CD14-positive monocyte (primary cell): ENCODE measurements at regions of chr22 and their contacts with region 1.

Region 1: GRCh38 chr22:37282385-37282677 is at the start of gene CYTH4:
- DNase-seq: peak; percentile 88 to 96 (median 91)
- H3K4me3 ChIP-seq: peak within 1 kb of the TSS; percentile 81 to 96 (median 82)
- H3K4me3 Mint-ChIP-seq: peak within 1 kb of the TSS; percentile 90 to 98
- H3K27ac ChIP-seq: peak within 1 kb of the TSS; percentile 98 to 99
- H3K27ac Mint-ChIP-seq: peak within 1 kb of the TSS; percentile 96 to 99 (median 98)
- H3K4me1 ChIP-seq: peaks cover 69 to 88% of the 10 kb centered on the region in 2 donors
- H3K4me1 Mint-ChIP-seq: peaks cover 73% of the 10 kb centered on the region
- H3K27me3 ChIP-seq: no peaks in the 10 kb centered on the region
- H3K27me3 Mint-ChIP-seq: peaks cover 0 to 4% (median 2%) of the 10 kb centered on the region in 3 donors
- CTCF ChIP-seq: no peak
- polyA plus RNA-seq, gene CYTH4: 51.0 to 254 (median 70.0) TPM

Region 2: DNA sequence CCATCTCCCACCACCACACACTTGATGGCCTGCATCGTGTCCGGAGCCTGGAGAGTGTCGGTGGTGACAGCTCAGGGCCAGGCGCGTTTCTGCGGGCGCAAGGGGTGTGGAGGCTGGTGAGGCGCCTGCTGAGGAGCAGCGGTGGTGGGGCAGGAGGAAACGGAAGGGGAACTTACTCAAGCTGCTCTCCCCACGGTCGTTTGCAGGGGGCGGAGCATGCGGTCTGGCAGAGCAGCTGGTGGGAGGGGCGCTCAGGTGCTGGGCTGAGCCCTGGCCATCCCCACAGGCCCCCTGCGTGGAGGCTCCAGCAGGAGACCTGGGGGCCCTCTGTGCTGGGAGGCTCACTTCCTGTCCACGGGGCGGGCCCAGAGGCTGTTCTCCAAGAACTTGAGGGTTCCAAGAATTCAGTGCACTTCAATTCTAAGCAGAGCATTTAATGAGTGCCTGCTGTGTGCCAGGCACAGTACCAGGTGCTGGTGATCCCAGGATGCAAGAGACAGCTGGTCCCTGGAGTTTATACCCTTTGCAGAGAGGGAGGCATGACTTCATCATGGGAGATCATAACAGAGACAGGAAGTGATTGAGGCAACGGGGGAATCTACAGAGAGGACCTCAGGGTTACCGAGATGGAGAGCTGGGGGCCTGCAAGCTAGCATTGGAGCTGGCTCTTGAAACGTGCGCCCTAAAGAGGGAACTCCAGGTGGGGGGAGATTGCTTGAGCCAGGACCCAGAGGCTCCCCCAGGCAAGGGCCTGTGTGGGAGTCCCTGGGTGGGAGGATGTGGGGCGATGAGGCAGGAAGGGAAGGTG is 38.0 kb before region 1 on chr22 and contains the start of gene RAC2:
- intact Hi-C with region 1: loop called in 1 of 2 experiments (anchors 5 kb)
- DNase-seq: peak; percentile 87 to 92 (median 89)
- H3K4me3 ChIP-seq: peak within 1 kb of the TSS; percentile 77 to 99 (median 96)
- H3K4me3 Mint-ChIP-seq: peak within 1 kb of the TSS; percentile 92 to 95
- H3K27ac ChIP-seq: peak within 1 kb of the TSS; percentile 96 to 98
- H3K27ac Mint-ChIP-seq: peak within 1 kb of the TSS; percentile 95 to 99 (median 97)
- H3K4me1 ChIP-seq: peaks cover 63 to 65% of the 10 kb centered on the region in 2 donors
- H3K4me1 Mint-ChIP-seq: peaks cover 62% of the 10 kb centered on the region
- H3K27me3 ChIP-seq: no peaks in the 10 kb centered on the region
- H3K27me3 Mint-ChIP-seq: peaks cover 0 to 3% (median 2%) of the 10 kb centered on the region in 3 donors
- CTCF ChIP-seq: no peak
- polyA plus RNA-seq, gene RAC2: 360 to 529 (median 526) TPM

Region 3: GRCh38 chr22:37267135-37267587 is 15.2 kb before region 1 on chr22:
- intact Hi-C with region 1: loop called in 1 of 2 experiments (anchors 2 kb)
- DNase-seq: peak in 2 of 3 donors; percentile 43 to 55
- H3K4me3 ChIP-seq: peak overlapping the region; percentile 21 to 82 (median 57)
- H3K4me3 Mint-ChIP-seq: peak overlapping the region; percentile 77 to 87
- H3K27ac ChIP-seq: peak overlapping the region; percentile 89 to 94
- H3K27ac Mint-ChIP-seq: peak overlapping the region; percentile 95 to 98 (median 97)
- H3K4me1 ChIP-seq: peaks cover 57 to 58% of the 10 kb centered on the region in 2 donors
- H3K4me1 Mint-ChIP-seq: peaks cover 56% of the 10 kb centered on the region
- H3K27me3 ChIP-seq: no peaks in the 10 kb centered on the region
- H3K27me3 Mint-ChIP-seq: peaks cover 2 to 15% (median 7%) of the 10 kb centered on the region in 3 donors
- CTCF ChIP-seq: peak; percentile 99

Region 4: DNA sequence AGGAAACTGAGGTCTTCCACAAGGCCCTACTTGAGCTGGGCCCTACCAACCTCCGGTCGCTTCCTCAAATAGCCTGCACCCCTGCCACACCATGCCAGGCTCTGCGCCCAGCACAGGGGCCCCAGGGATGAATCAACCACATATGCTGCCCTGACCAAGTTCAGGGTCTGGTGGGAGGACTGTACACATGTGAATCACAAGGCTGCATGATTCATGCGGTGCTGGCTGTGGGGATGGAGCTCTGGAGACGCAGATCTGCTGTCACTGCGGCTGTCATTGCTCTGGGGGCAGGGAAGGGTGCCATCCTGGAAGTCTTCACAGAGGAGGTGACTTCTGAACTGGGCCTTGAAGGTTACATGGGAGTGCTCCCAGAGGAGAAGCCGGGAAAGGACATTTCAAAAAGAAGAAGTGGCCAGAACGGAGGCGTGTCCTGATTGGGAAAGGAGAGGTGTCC is 21.5 kb after region 1 on chr22:
- intact Hi-C with region 1: loop called in 1 of 2 experiments (anchors 1 kb)
- DNase-seq: peak; percentile 96 to 99 (median 97)
- H3K4me3 ChIP-seq: peak overlapping the region in 1 of 3 experiments; percentile 16
- H3K4me3 Mint-ChIP-seq: peak overlapping the region in 1 of 2 donors; percentile 19
- H3K27ac ChIP-seq: peak overlapping the region; percentile 96
- H3K27ac Mint-ChIP-seq: peak overlapping the region; percentile 87 to 99 (median 97)
- H3K4me1 ChIP-seq: peaks cover 100% of the 10 kb centered on the region in 2 donors
- H3K4me1 Mint-ChIP-seq: peaks cover 97% of the 10 kb centered on the region
- H3K27me3 ChIP-seq: no peaks in the 10 kb centered on the region
- H3K27me3 Mint-ChIP-seq: peaks cover 0 to 4% (median 2%) of the 10 kb centered on the region in 3 donors
- CTCF ChIP-seq: no peak

Region 5: DNA sequence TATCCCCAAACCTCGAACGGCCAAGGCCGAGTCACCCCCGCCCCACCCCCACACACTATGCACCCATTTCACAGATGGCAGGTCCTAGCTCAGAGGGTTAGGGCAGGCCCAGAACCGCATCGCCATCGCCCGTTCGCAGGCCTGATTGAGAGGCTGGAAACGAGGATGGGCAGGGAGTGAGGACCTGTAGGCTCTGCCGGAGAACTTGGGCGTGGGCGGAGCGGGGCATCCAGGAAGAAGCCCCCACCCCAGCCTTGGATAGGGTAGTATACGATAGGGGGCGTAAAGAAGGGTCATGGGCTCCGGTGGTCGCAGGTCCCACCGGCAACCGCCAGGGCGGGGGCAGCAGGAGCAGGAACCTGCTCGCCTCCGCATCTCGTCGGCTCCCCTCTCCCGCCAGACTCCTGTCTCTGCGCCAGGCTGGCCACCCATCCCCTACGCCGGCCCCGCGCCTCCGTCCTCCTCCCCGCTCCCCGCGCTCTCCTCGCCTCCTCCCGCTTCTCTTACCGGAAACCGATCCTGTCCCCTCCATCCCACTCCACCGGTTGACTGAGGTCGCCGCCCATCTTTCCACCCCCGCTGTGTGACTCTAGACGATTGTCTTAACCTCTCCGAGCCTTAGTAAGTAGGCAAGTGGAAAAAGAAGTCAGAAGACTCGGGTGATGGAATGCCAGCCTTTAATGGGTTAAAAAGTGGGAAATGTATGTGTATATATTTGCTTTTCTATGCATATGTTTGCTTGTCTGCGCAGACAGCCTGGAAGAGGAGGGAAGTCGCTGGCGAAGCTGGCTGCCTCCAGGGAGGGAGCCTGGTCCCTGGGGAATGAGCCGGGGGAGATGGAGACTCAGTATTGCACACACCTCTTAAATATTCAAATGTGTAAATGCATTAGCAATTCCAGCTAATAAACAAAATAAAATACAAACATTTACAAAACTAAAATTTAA is 52.8 kb after region 1 on chr22:
- intact Hi-C with region 1: no loop called
- DNase-seq: no peak
- H3K4me3 ChIP-seq: no peak overlapping the region
- H3K4me3 Mint-ChIP-seq: peak overlapping the region in 1 of 2 donors; percentile 82
- H3K27ac ChIP-seq: no peak overlapping the region
- H3K27ac Mint-ChIP-seq: no peak overlapping the region
- H3K4me1 ChIP-seq: peaks cover 11 to 15% of the 10 kb centered on the region in 2 donors
- H3K4me1 Mint-ChIP-seq: peaks cover 7% of the 10 kb centered on the region
- H3K27me3 ChIP-seq: peaks cover 22 to 48% of the 10 kb centered on the region in 2 donors
- H3K27me3 Mint-ChIP-seq: peaks cover 52 to 68% (median 58%) of the 10 kb centered on the region in 3 donors
- CTCF ChIP-seq: no peak

Region 6: GRCh38 chr22:37362621-37363020 is 80.3 kb after region 1 on chr22:
- intact Hi-C with region 1: no loop called
- DNase-seq: no peak
- H3K4me3 ChIP-seq: no peak overlapping the region
- H3K4me3 Mint-ChIP-seq: no peak overlapping the region
- H3K27ac ChIP-seq: no peak overlapping the region
- H3K27ac Mint-ChIP-seq: no peak overlapping the region
- H3K4me1 ChIP-seq: peaks cover 21 to 24% of the 10 kb centered on the region in 2 donors
- H3K4me1 Mint-ChIP-seq: peaks cover 21% of the 10 kb centered on the region
- H3K27me3 ChIP-seq: no peaks in the 10 kb centered on the region
- H3K27me3 Mint-ChIP-seq: peaks cover 1 to 4% (median 4%) of the 10 kb centered on the region in 3 donors
- CTCF ChIP-seq: no peak